MCF 10A (cell line): ENCODE measurements at regions of chr3 and their contacts with region 1.

Region 1: GRCh38 chr3:57100046-57100695 is 39.7 kb downstream of the SPATA12 start:
- DNase-seq: peak; percentile 83
- H3K4me3 Mint-ChIP-seq: no peak overlapping the region
- H3K27ac Mint-ChIP-seq: no peak overlapping the region
- H3K4me1 Mint-ChIP-seq: no peaks in the 10 kb centered on the region
- H3K27me3 Mint-ChIP-seq: no peaks in the 10 kb centered on the region
- CTCF ChIP-seq: peak; percentile 82

Region 2: DNA sequence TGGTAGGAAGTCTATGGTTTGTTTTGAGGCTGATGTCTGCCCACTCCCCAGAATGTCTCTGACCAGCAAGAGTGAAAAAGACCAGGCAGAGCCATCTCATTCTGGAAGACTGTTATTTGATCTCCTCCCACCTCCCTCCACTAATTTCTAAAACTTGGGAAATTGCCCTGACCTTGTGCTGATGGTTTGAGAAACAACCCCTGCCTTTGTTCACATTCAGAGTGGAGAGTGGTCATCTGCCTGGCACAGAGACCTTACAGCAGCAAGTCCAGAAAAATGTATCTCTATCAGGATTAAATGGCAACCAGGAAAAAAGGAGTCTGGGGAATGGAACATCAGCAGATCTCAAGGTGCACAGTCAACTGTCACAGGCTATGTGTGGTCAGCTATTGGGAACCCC is 14.0 kb before region 1 on chr3:
- CTCF ChIA-PET with region 1: interaction called, 31 read pairs
- POLR2A ChIA-PET with region 1: no interaction called
- intact Hi-C with region 1: no loop called
- DNase-seq: no peak
- H3K4me3 Mint-ChIP-seq: no peak overlapping the region
- H3K27ac Mint-ChIP-seq: no peak overlapping the region
- H3K4me1 Mint-ChIP-seq: peaks cover 6% of the 10 kb centered on the region
- H3K27me3 Mint-ChIP-seq: no peaks in the 10 kb centered on the region
- CTCF ChIP-seq: no peak

Region 3: DNA sequence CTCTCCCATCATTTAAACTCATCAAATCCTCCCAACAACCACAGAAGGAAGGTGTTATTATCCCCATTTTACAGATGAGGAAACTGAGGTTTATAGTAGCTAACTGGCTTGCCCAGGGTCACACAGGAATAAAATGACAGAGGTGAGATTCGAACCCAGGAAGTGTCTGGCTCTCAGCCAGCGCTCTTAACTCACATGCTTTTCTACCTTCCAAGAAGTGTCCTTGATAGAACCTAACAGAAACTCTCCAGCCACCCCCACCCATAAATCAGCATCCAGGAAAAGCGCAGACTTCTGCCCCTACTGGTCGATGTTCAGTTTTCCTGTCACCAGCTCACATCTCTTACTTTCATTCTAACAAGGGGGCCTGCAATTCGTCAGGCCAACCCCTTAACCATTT is 12.0 kb after region 1 on chr3:
- CTCF ChIA-PET with region 1: interaction called, 30 read pairs
- POLR2A ChIA-PET with region 1: interaction called, 3 read pairs
- intact Hi-C with region 1: no loop called
- DNase-seq: no peak
- H3K4me3 Mint-ChIP-seq: no peak overlapping the region
- H3K27ac Mint-ChIP-seq: no peak overlapping the region
- H3K4me1 Mint-ChIP-seq: no peaks in the 10 kb centered on the region
- H3K27me3 Mint-ChIP-seq: no peaks in the 10 kb centered on the region
- CTCF ChIP-seq: no peak

Region 4: DNA sequence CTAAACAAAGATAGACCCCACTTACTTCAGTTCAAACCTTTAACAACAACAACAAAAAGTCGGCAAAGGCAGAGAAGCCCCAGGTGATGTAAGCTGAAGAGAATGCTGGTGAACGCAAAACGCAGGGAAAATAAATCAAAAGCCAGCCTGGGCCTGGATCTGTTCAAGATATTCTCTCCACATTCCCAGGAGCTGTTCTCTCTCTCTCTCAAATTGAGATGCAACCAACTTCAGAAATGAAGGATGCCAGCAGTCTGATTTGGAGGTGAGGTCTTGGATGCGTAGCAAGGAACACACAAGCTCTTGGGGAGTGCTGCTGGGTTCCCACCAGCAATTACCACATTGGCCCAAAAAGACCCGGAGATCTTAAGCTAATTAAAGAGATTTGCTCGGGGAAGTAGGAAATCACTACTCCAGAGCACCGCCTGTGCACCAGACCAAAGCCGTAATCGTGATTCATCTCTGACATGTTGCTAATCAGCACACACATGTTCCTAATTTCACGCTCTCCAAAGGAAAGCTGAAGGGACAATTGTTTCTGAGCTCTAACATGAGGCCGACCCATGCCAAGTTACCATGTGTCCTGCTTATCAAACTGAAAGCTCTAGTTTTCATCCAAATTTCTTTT is 27.8 kb after region 1 on chr3:
- CTCF ChIA-PET with region 1: interaction called, 10 read pairs
- POLR2A ChIA-PET with region 1: no interaction called
- intact Hi-C with region 1: no loop called
- DNase-seq: no peak
- H3K4me3 Mint-ChIP-seq: no peak overlapping the region
- H3K27ac Mint-ChIP-seq: no peak overlapping the region
- H3K4me1 Mint-ChIP-seq: no peaks in the 10 kb centered on the region
- H3K27me3 Mint-ChIP-seq: no peaks in the 10 kb centered on the region
- CTCF ChIP-seq: no peak

Region 5: DNA sequence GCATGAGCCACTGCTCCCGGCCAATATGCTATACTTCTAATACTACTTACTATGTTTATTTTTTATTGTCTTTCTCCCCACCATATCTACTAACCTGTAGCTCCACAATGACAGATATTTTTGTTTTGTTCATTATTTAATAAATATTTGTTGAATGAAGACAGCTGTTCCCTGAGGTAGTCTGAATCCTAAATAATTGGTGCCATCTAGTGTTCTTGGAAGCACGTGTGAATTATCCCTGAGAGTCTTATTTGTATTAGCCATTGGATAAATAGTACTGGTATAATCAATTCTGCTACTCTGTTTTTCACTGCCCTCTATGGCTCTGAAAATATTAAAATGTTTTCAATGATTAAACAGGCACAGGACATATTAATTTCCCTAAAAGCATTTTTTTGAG is 121.7 kb after region 1 on chr3:
- CTCF ChIA-PET with region 1: interaction called, 43 read pairs
- POLR2A ChIA-PET with region 1: interaction called, 4 read pairs
- intact Hi-C with region 1: loop called (anchors 1 kb)
- DNase-seq: peak; percentile 39
- H3K4me3 Mint-ChIP-seq: no peak overlapping the region
- H3K27ac Mint-ChIP-seq: no peak overlapping the region
- H3K4me1 Mint-ChIP-seq: peaks cover 5% of the 10 kb centered on the region
- H3K27me3 Mint-ChIP-seq: no peaks in the 10 kb centered on the region
- CTCF ChIP-seq: peak; percentile 40

Region 6: DNA sequence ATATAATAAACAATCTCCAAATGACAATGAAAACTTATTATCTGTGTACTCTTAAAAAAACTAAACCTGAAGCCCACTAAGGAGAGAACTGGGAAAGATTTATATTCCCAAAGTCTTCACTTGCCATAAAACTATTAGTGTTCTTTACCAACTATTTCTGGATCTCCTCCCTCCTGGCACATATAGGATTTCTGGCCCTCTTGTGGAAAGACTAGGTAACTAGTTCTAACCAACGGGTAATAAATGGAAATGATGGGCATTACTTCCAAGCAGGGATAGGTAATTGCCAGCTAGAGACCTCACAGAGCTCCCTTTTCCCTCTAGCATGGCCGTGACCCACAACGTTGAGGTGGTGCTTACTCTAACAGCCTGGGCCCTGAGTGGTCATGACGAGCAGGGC is 333.9 kb after region 1 on chr3:
- CTCF ChIA-PET with region 1: interaction called, 6 read pairs
- POLR2A ChIA-PET with region 1: no interaction called
- intact Hi-C with region 1: loop called (anchors 2 kb)
- DNase-seq: peak; percentile 69
- H3K4me3 Mint-ChIP-seq: no peak overlapping the region
- H3K27ac Mint-ChIP-seq: no peak overlapping the region
- H3K4me1 Mint-ChIP-seq: no peaks in the 10 kb centered on the region
- H3K27me3 Mint-ChIP-seq: peaks cover 26% of the 10 kb centered on the region
- CTCF ChIP-seq: peak; percentile 48